HEK293T (cell line): ENCODE measurements at regions of chr15 and their contacts with region 1.

Region 1: DNA sequence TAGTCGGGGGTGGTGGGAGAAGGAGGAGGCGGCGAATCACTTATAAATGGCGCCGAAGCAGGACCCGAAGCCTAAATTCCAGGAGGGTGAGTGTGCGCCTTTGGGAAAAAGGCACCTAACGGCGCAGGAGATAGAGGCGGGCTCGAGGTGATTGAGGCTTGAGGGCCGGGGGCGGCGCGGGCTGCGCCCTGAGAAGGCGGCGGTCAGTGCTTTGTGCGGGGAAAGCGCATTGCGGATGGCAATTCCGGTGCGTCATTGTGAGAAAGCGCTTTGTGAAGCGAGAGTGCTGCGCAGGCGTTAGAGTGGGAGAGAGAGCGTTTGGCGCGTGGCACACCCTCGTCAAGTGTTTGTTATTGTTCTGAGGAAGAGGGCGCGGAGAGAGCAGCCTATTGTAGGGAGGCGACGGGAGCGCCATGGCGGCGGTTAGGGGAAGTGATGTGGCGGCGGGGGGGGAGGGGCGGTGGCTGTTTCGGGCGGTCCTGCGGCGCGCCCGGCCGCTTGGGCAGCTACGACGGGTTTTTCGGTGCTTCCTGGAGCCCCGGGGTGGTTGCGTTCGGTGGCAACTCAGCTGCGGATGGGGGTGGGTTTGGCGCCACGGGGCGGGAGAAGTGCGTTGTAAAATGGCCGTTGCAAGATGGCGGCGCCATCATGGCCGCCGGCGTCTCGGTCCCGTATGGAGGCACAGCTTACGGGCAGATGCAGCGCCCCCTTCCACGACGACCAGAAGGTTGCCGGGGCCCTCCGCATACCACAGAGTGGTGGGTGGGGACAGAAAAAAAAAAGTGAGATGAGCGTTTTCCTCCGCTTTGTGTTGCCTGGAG is 492 bp downstream of the MORF4L1 start:
- DNase-seq: peak; percentile 76

Region 2: GRCh38 chr15:78291716-78292115 is 581.5 kb before region 1 on chr15:
- CTCF ChIA-PET with region 1: interaction called, 13 read pairs
- POLR2A ChIA-PET with region 1: no interaction called
- DNase-seq: no peak

Region 3: DNA sequence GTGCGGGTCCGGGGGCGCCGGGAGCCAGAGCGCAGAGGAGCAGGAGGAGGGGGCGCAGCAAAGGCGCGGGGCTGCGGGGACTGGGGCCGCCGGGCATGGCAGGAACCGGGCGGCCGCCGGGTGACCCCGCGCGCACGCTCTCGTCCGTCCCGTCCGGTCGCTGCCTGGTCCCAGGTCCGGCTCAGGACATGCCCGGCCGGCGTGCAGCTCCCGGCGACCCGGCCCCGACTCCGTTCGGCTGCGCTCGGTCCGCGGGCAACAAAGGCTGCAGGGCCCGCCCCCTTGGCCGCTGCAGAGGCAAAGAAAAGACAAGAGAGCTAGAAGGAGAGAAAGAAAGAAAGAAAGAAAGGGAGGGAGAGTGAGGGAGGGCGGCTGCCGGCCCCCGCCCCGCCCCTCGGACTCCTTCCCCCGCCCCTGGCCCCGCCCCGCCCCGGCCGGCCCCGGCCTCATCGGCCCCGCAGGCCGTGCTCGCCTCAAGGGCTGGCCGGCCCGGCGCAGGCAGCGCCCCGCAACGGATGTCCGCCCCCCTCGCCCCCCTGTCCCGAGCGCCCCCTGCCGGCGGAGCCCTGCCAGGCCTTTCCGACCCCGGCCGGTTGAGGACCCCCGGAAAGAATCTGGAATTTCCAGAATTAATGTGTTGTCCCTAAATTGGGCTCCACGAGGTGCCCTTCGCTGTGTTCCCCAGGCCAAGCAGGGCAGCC is 61.9 kb before region 1 on chr15 and contains the start of gene ADAMTS7:
- CTCF ChIA-PET with region 1: interaction called, 7 read pairs
- POLR2A ChIA-PET with region 1: interaction called, 11 read pairs
- DNase-seq: peak; percentile 92

Region 4: GRCh38 chr15:78859971-78860732 is 13.0 kb before region 1 on chr15:
- CTCF ChIA-PET with region 1: interaction called, 5 read pairs
- POLR2A ChIA-PET with region 1: interaction called, 49 read pairs
- DNase-seq: peak; percentile 79